Body of pancreas (tissue), 4 donors: ENCODE measurements at regions of chr1 and their contacts with region 1.

Region 1: DNA sequence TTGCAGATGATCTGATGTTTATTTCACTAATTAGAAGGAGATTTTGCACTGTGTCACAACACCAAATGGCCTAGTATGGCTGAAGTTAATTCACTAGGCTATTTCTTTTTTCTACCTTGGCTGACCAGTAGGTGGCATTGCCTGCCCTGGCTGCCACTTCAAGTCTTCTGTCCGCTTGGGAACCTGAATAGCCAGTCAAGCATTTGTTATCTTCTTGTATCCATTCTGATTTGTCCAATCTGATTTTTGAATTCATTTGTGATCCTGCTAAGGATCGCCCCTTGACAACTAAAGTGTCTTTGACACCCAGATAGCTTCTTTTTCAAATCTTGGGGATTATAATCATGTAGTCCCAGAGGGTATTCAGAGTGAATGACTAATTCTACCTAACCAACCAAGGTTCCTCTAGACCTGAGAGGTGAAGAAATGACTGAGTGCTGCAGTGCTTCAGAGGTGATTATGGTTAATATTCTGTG is 99.4 kb downstream of the GIPC2 start:
- DNase-seq: peak; percentile 61 to 71 (median 66)
- ATAC-seq: peak; percentile 87
- H3K4me3 ChIP-seq: no peak overlapping the region
- H3K27ac ChIP-seq: no peak overlapping the region
- H3K4me1 ChIP-seq: peaks cover 19% of the 10 kb centered on the region
- H3K27me3 ChIP-seq: no peaks in the 10 kb centered on the region
- CTCF ChIP-seq: peak; percentile 80 to 91 (median 87)
- POLR2A ChIP-seq: no peak

Region 2: GRCh38 chr1:78070758-78071157 is 74.4 kb before region 1 on chr1:
- intact Hi-C with region 1: no loop called
- DNase-seq: no peak
- ATAC-seq: peak; percentile 62
- H3K4me3 ChIP-seq: no peak overlapping the region
- H3K27ac ChIP-seq: peak overlapping the region in 1 of 4 donors; percentile 39
- H3K4me1 ChIP-seq: peaks cover 30% of the 10 kb centered on the region
- H3K27me3 ChIP-seq: no peaks in the 10 kb centered on the region
- CTCF ChIP-seq: no peak
- POLR2A ChIP-seq: no peak

Region 3: GRCh38 chr1:78607334-78607927 is 462.3 kb after region 1 on chr1:
- intact Hi-C with region 1: loop called (anchors 5 kb)
- DNase-seq: no peak
- ATAC-seq: peak; percentile 48
- H3K4me3 ChIP-seq: no peak overlapping the region
- H3K27ac ChIP-seq: no peak overlapping the region
- H3K4me1 ChIP-seq: peaks cover 12% of the 10 kb centered on the region
- H3K27me3 ChIP-seq: no peaks in the 10 kb centered on the region
- CTCF ChIP-seq: peak; percentile 33 to 73 (median 69)
- POLR2A ChIP-seq: no peak

Region 4: GRCh38 chr1:78676347-78676982 is 531.3 kb after region 1 on chr1:
- intact Hi-C with region 1: loop called (anchors 10 kb)
- DNase-seq: peak; percentile 57 to 78 (median 70)
- ATAC-seq: peak; percentile 60
- H3K4me3 ChIP-seq: no peak overlapping the region
- H3K27ac ChIP-seq: no peak overlapping the region
- H3K4me1 ChIP-seq: no peaks in the 10 kb centered on the region
- H3K27me3 ChIP-seq: no peaks in the 10 kb centered on the region
- CTCF ChIP-seq: peak; percentile 56 to 97 (median 82)
- POLR2A ChIP-seq: no peak